Naive thymus-derived CD4-positive, alpha-beta T cell (primary cell): ENCODE measurements at regions of chr6 and their contacts with region 1.

Region 1: DNA sequence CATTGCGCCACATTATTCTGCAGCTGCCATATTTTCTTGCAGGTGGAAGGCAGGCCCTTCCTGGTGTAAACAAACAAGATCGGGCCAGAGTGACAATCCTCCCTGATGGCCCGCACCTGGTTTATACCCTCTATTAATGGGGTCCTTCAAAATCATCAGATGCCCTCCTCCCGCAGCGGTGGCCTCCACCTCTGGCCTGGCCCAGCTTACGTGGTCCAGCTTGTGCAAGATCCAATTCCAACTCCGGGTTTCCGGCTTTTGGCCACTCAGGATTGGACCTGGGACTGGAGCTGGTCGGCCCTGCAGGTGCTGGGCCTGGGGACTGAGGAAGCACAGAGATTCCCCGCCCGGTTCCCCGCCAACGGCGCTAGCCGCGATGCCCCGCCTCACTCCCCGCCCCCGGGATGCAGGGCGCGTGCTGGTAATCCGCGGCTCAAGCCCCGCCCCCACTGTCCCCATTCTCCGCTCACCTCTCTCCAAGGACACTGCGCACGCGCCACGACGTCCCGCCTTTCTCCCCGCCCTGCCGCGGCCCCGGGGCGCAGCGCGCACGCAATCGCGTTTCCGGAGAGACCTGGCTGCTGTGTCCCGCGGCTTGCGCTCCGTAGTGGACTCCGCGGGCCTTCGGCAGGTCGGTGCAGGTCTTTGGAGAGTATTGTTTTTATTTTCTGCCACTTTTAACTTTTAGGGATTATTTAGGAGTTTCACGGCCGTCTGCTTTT is at the start of gene TMEM14B:
- DNase-seq: peak; percentile 97 to 100 (median 99)
- ATAC-seq: peak; percentile 99
- H3K4me3 ChIP-seq: peak within 1 kb of the TSS; percentile 71
- H3K4me3 Mint-ChIP-seq: peak within 1 kb of the TSS; percentile 85 to 98 (median 91)
- H3K27ac ChIP-seq: peak within 1 kb of the TSS; percentile 79
- H3K27ac Mint-ChIP-seq: peak within 1 kb of the TSS; percentile 82 to 99 (median 96)
- H3K4me1 ChIP-seq: peaks cover 12 to 37% of the 10 kb centered on the region in 2 donors
- H3K4me1 Mint-ChIP-seq: peaks cover 24 to 67% (median 62%) of the 10 kb centered on the region in 7 donors
- H3K27me3 ChIP-seq: no peaks in the 10 kb centered on the region
- H3K27me3 Mint-ChIP-seq: no peaks in the 10 kb centered on the region
- total RNA-seq, gene TMEM14B: 48.6 to 93.8 (median 75.4) TPM

Region 2: DNA sequence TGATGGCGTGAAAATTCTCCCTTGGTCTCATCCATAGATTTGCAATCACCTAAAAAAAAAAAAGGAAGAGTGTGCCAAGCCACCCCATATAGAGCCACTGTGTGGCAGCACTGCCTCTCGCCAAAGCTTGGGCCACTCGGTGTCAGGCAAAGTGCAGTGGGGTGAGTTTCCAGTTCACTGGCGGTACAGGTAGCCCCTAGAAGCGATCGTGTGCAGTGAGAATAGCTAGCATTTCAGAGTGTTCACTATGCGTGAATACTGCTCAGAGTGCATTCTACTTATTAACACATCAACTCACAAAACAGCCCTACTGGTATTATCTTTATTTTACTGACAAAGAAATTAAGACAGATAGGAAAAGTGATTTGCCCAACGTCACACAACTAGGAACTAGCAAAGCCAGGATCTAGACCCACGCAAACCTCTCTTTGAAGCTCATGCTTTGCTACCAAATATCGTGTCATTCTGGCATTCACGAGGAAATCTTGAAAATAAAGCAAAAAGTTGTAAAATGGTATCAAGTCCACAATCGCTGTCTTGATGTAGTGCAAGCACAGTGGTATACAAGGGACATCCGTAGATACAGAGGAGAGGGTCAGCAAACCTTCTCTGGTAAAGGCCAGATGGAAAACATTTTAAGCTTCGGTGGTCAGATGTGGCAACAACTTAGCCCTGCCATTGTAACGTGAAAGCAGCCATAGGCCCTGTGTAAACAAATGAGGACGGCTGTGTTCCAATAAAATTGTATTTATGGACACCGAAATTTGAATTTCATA is 236.6 kb before region 1 on chr6:
- CTCF ChIA-PET with region 1: no interaction called
- POLR2A ChIA-PET with region 1: no interaction called
- intact Hi-C with region 1: loop called in 1 of 2 experiments (anchors 2 kb)
- DNase-seq: peak in 8 of 9 donors; percentile 9 to 53 (median 39)
- ATAC-seq: peak; percentile 94
- H3K4me3 ChIP-seq: no peak overlapping the region
- H3K4me3 Mint-ChIP-seq: peak overlapping the region in 5 of 10 donors; percentile 8 to 40 (median 12)
- H3K27ac ChIP-seq: no peak overlapping the region
- H3K27ac Mint-ChIP-seq: peak overlapping the region in 1 of 9 donors; percentile 28
- H3K4me1 ChIP-seq: no peaks in the 10 kb centered on the region
- H3K4me1 Mint-ChIP-seq: peaks cover 0 to 7% (median 5%) of the 10 kb centered on the region in 7 donors
- H3K27me3 ChIP-seq: no peaks in the 10 kb centered on the region
- H3K27me3 Mint-ChIP-seq: peaks cover 0 to 11% (median 7%) of the 10 kb centered on the region in 5 donors

Region 3: GRCh38 chr6:10722820-10723566 is 24.4 kb before region 1 on chr6 and contains the start of gene TMEM14C:
- CTCF ChIA-PET with region 1: no interaction called
- POLR2A ChIA-PET with region 1: interaction called, 72 read pairs
- intact Hi-C with region 1: loop called (anchors 1 kb)
- DNase-seq: peak; percentile 48 to 93 (median 61)
- ATAC-seq: peak; percentile 86
- H3K4me3 ChIP-seq: peak within 1 kb of the TSS; percentile 82
- H3K4me3 Mint-ChIP-seq: peak within 1 kb of the TSS; percentile 91 to 98 (median 96)
- H3K27ac ChIP-seq: peak within 1 kb of the TSS; percentile 76
- H3K27ac Mint-ChIP-seq: peak within 1 kb of the TSS; percentile 89 to 97 (median 94)
- H3K4me1 ChIP-seq: peaks cover 14 to 15% of the 10 kb centered on the region in 2 donors
- H3K4me1 Mint-ChIP-seq: peaks cover 27 to 62% (median 53%) of the 10 kb centered on the region in 7 donors
- H3K27me3 ChIP-seq: no peaks in the 10 kb centered on the region
- H3K27me3 Mint-ChIP-seq: no peaks in the 10 kb centered on the region
- total RNA-seq, gene TMEM14C: 20.2 to 64.3 (median 25.0) TPM

Region 4: GRCh38 chr6:10837995-10838793 is 90.8 kb after region 1 on chr6 and contains the start of gene MAK:
- CTCF ChIA-PET with region 1: no interaction called
- POLR2A ChIA-PET with region 1: no interaction called
- intact Hi-C with region 1: loop called (anchors 1 kb)
- DNase-seq: peak; percentile 80 to 93 (median 86)
- ATAC-seq: peak; percentile 98
- H3K4me3 ChIP-seq: peak within 1 kb of the TSS; percentile 59
- H3K4me3 Mint-ChIP-seq: peak within 1 kb of the TSS; percentile 71 to 89 (median 78)
- H3K27ac ChIP-seq: no peak within 1 kb of the TSS
- H3K27ac Mint-ChIP-seq: peak within 1 kb of the TSS in 4 of 9 donors; percentile 21 to 87 (median 55)
- H3K4me1 ChIP-seq: peaks cover 14 to 20% of the 10 kb centered on the region in 2 donors
- H3K4me1 Mint-ChIP-seq: peaks cover 10 to 22% (median 19%) of the 10 kb centered on the region in 7 donors
- H3K27me3 ChIP-seq: peaks cover 23 to 29% of the 10 kb centered on the region in 2 donors
- H3K27me3 Mint-ChIP-seq: peaks cover 52 to 65% (median 61%) of the 10 kb centered on the region in 5 donors
- total RNA-seq, gene MAK: 0.34 to 0.42 TPM in 2 of 5 experiments, not detected in the others